HCT116 (cell line): ENCODE measurements at regions of chr13 and their contacts with region 1.

Region 1: GRCh38 chr13:106619688-106620555 is 52.0 kb upstream of the ARGLU1 start:
- DNase-seq: peak; percentile 44
- ATAC-seq: peak; percentile 98
- H3K4me3 ChIP-seq: no peak overlapping the region
- H3K27ac ChIP-seq: no peak overlapping the region
- H3K4me1 ChIP-seq: peaks cover 0 to 4% of the 10 kb centered on the region in 2 experiments; a peak in 1 of 4 replicates
- H3K27me3 ChIP-seq: peaks cover 45% of the 10 kb centered on the region
- CTCF ChIP-seq: peak; percentile 43 to 88 (median 71); a peak in 5 of 6 replicates
- POLR2A ChIP-seq: no peak
- RAD21 ChIP-seq: peak; percentile 67

Region 2: DNA sequence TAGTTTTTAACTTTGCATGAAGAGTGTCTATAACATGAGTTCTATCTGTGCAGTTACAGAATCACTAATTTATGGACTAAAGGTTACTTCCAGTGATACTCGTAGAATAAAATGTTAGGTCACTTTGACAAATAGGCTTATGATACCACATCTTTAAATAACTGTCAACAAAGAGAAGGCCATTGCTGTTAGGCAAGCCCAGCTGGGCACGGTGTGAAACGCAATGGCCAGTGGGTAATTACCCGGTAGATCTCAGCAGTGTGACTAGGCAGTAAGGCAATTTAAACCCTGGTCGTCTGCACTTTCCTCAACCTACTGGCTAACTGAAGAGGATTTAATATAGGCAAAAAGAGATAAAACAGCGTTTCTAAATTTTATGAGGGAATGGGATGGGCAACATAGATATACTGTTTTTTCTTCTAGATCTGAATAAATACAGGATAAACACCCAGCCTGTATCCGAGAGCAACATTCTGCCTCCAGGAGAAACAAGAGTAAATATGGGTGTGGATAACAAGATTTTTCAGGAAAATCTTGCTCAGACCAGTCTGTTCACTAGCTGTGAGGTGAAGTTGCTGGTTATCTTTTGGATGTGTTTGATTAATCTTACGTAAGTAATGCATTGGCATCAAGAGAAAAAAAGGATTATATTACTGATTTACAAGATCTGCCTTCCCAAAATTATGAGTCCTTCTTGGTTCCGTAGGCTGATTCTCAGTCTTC is 715.7 kb before region 1 on chr13:
- CTCF ChIA-PET with region 1: no interaction called
- POLR2A ChIA-PET with region 1: no interaction called
- RAD21 ChIA-PET with region 1: no interaction called
- intact Hi-C with region 1: no loop called
- DNase-seq: no peak
- ATAC-seq: no peak
- H3K4me3 ChIP-seq: no peak overlapping the region
- H3K27ac ChIP-seq: no peak overlapping the region
- H3K4me1 ChIP-seq: peaks cover 0 to 6% of the 10 kb centered on the region in 2 experiments; a peak in 1 of 4 replicates
- H3K27me3 ChIP-seq: no peaks in the 10 kb centered on the region
- CTCF ChIP-seq: no peak
- POLR2A ChIP-seq: no peak
- RAD21 ChIP-seq: no peak

Region 3: GRCh38 chr13:106471957-106472543 is 147.9 kb before region 1 on chr13:
- CTCF ChIA-PET with region 1: no interaction called
- POLR2A ChIA-PET with region 1: no interaction called
- RAD21 ChIA-PET with region 1: no interaction called
- intact Hi-C with region 1: no loop called
- DNase-seq: peak; percentile 95
- ATAC-seq: peak; percentile 98
- H3K4me3 ChIP-seq: peak overlapping the region; percentile 28 to 44
- H3K27ac ChIP-seq: peak overlapping the region; percentile 42; the same call in 1 of the 2 replicates
- H3K4me1 ChIP-seq: peaks cover 15 to 38% of the 10 kb centered on the region in 2 experiments
- H3K27me3 ChIP-seq: no peaks in the 10 kb centered on the region
- CTCF ChIP-seq: no peak
- POLR2A ChIP-seq: no peak
- RAD21 ChIP-seq: peak; percentile 37

Region 4: GRCh38 chr13:106609116-106609515 is 10.8 kb before region 1 on chr13:
- CTCF ChIA-PET with region 1: interaction called, 11 read pairs
- POLR2A ChIA-PET with region 1: no interaction called
- RAD21 ChIA-PET with region 1: no interaction called
- intact Hi-C with region 1: no loop called
- DNase-seq: no peak
- ATAC-seq: no peak
- H3K4me3 ChIP-seq: no peak overlapping the region
- H3K27ac ChIP-seq: no peak overlapping the region
- H3K4me1 ChIP-seq: no peaks in the 10 kb centered on the region
- H3K27me3 ChIP-seq: no peaks in the 10 kb centered on the region
- CTCF ChIP-seq: no peak
- POLR2A ChIP-seq: no peak
- RAD21 ChIP-seq: no peak

Region 5: DNA sequence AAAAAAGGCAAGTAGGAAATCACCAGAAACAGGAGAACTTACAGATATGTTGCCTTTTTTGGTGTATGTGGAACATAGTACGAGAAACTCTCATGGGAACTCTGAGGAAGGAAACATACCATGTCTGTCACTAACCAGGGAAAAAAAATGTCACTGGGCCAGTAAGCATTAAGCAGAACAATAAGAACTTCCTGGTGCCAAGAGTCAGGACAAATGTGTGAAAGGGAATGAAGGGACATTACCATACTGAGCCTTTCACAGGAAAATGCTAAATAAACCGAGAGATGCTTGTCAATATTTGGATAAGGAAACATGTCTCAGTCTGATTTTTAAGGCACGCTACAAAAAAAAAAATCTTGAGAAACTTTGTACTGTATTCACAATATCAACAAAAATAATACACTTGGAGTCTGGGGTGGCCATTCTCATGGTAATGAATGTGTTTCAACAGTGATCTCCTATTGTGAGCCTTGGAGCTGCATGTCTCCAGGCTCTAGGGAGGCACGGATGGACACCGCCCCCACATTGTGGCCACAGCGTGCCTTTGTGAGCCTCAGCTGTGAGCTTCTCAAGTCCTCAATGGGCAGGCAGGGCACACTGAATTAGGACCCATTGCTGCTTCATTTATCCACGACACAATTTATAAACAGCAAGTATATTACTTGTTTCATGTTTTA is 61.0 kb after region 1 on chr13:
- CTCF ChIA-PET with region 1: no interaction called
- POLR2A ChIA-PET with region 1: no interaction called
- RAD21 ChIA-PET with region 1: no interaction called
- intact Hi-C with region 1: no loop called
- DNase-seq: no peak
- ATAC-seq: no peak
- H3K4me3 ChIP-seq: no peak overlapping the region
- H3K27ac ChIP-seq: no peak overlapping the region
- H3K4me1 ChIP-seq: no peaks in the 10 kb centered on the region
- H3K27me3 ChIP-seq: peaks cover 37% of the 10 kb centered on the region; the same call in 1 of the 2 replicates
- CTCF ChIP-seq: no peak
- POLR2A ChIP-seq: no peak
- RAD21 ChIP-seq: no peak

Region 6: GRCh38 chr13:106835477-106835876 is 215.6 kb after region 1 on chr13:
- CTCF ChIA-PET with region 1: no interaction called
- POLR2A ChIA-PET with region 1: no interaction called
- RAD21 ChIA-PET with region 1: no interaction called
- intact Hi-C with region 1: no loop called
- DNase-seq: no peak
- ATAC-seq: no peak
- H3K4me3 ChIP-seq: no peak overlapping the region
- H3K27ac ChIP-seq: no peak overlapping the region
- H3K4me1 ChIP-seq: no peaks in the 10 kb centered on the region
- H3K27me3 ChIP-seq: peaks cover 11% of the 10 kb centered on the region; the same call in 1 of the 2 replicates
- CTCF ChIP-seq: no peak
- POLR2A ChIP-seq: no peak
- RAD21 ChIP-seq: no peak